GM12878 (cell line): ENCODE measurements at regions of chr2 and their contacts with region 1.

Region 1: DNA sequence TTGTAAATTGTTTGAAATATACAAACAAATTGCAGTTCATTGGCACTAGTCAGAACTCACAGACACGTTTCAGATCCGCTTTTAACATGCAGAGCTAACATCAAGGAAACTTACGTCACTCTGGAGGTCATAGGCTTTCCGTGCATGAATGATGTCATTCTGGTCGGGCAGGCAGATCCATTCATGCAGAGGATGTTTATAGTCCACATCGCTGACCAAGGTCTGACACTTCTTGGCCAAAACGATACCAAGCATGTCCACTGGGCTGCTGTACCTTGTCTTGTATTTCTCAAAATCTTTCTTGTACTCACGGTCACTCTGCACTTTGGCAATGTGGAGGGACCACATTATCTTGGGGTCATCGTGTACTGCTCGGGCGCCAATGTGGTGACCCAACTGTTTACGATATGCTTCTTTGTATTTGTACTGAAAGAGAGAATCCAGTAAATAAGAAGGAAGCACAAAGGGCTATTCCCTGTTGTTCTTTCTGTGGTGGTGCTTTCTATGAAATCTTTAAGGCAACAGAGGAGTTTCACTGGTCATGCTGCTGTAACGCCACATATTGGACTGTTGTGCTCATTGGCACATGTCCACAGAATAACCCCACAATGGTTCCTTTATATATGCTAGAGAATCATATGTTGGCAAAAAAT is 114.8 kb downstream of the NEB start:
- DNase-seq: no peak
- ATAC-seq: peak; percentile 98
- H3K4me3 ChIP-seq: no peak overlapping the region
- H3K27ac ChIP-seq: no peak overlapping the region
- H3K4me1 ChIP-seq: no peaks in the 10 kb centered on the region
- H3K27me3 ChIP-seq: peaks cover 0 to 2% of the 10 kb centered on the region in 2 experiments; a peak in 2 of 4 replicates
- CTCF ChIP-seq: no peak
- EP300 ChIP-seq: no peak
- POLR2A ChIP-seq: no peak
- RAD21 ChIP-seq: no peak

Region 2: DNA sequence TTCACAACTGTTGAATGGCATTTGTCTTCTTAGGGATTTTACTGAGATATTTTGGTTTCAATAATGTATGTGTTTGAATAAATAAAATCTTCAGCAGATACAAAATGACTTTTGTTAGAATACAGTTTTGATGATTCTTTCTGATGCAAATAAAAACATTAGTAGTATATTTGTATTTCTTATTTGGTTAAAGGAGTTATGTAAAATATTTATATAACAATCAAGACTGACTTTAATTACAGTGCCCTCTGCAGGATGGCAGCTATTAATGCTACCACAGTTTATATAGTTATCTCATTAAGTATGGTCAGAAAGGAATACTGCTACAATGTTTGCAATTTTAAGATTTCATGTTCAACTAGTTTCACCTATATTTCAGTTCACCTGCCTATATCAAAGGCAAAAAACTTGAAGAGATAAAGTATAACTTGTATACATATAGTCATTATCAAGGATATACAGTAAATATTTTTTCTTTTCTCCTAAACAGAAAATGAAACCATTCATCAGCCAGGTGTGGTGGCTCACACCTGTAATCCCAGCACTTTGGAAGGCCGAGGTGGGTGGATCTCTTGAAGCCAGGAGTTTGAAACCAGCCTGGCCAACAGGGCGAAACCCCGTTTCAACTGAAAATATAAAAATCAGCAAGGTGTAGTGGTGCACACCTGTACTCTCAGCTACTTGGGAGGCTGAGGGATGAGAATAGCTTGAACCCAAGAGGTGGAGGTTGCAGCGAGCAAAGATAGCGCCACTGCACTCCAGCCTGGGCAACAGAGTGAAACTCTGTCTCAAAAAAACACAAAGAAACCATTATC is 189.0 kb after region 1 on chr2:
- CTCF ChIA-PET with region 1: no interaction called
- POLR2A ChIA-PET with region 1: no interaction called
- RAD21 ChIA-PET with region 1: no interaction called
- SMC1A ChIA-PET with region 1: no interaction called
- in situ Hi-C with region 1: no loop called
- intact Hi-C with region 1: no loop called
- DNase-seq: no peak
- ATAC-seq: peak; percentile 64
- H3K4me3 ChIP-seq: no peak overlapping the region
- H3K27ac ChIP-seq: no peak overlapping the region
- H3K4me1 ChIP-seq: no peaks in the 10 kb centered on the region
- H3K27me3 ChIP-seq: no peaks in the 10 kb centered on the region
- CTCF ChIP-seq: peak in 2 of 3 experiments; percentile 35 to 41; a peak in 3 of 6 replicates
- EP300 ChIP-seq: no peak
- POLR2A ChIP-seq: no peak
- RAD21 ChIP-seq: peak; percentile 38; the same call in 1 of the 2 replicates

Region 3: DNA sequence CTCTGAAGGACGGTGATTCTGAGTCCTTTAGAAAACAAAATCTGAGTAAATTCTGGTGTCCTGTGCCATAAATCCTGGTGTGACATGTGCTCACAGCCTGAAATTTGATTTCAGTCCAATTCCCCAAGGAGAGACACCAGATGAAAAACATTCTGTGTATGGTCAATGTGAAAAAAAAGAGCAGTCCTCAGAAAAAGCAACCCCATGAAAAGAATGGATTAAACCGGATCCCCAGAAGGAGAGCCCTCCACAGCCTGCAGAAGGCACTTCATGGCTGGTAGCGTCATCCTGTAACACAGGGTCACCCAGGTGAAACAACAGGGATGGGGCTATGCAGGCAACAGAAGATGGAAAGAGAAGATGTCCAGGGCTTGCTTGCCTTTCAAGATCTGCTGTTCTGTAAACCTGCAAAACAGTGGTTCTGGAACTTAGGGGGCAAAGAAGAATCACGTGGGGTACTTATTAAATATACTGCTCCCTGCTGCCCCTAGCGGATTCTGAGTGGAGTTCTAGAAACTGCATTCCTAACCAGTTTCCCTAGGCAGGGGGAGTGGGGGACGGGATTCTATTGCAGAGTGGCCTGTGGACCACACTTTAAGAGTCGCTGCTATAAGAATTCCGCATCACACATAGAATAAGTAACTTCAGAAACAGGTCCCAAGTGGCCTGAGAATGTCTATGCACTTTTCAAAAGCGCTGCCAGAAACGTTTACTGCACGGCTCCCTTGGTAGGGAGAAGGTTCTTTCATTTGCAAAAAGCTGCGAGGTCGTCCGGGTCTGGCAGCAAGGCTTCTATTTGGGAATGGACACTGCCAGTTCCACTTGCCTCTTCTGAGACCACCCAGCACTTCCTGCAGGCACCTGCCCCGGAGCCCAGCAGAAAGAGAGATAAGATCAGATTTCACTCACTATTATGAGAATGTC is 327.7 kb after region 1 on chr2:
- CTCF ChIA-PET with region 1: interaction called, 6 read pairs
- POLR2A ChIA-PET with region 1: no interaction called
- RAD21 ChIA-PET with region 1: no interaction called
- SMC1A ChIA-PET with region 1: no interaction called
- in situ Hi-C with region 1: no loop called
- intact Hi-C with region 1: loop called (anchors 10 kb)
- DNase-seq: no peak
- ATAC-seq: peak; percentile 90
- H3K4me3 ChIP-seq: no peak overlapping the region
- H3K27ac ChIP-seq: no peak overlapping the region
- H3K4me1 ChIP-seq: no peaks in the 10 kb centered on the region
- H3K27me3 ChIP-seq: no peaks in the 10 kb centered on the region
- CTCF ChIP-seq: peak; percentile 40 to 69 (median 56)
- EP300 ChIP-seq: no peak
- POLR2A ChIP-seq: no peak
- RAD21 ChIP-seq: peak; percentile 52